CD8-positive, alpha-beta T cell (primary cell): ENCODE measurements at regions of chr1 and their contacts with region 1.

Region 1: DNA sequence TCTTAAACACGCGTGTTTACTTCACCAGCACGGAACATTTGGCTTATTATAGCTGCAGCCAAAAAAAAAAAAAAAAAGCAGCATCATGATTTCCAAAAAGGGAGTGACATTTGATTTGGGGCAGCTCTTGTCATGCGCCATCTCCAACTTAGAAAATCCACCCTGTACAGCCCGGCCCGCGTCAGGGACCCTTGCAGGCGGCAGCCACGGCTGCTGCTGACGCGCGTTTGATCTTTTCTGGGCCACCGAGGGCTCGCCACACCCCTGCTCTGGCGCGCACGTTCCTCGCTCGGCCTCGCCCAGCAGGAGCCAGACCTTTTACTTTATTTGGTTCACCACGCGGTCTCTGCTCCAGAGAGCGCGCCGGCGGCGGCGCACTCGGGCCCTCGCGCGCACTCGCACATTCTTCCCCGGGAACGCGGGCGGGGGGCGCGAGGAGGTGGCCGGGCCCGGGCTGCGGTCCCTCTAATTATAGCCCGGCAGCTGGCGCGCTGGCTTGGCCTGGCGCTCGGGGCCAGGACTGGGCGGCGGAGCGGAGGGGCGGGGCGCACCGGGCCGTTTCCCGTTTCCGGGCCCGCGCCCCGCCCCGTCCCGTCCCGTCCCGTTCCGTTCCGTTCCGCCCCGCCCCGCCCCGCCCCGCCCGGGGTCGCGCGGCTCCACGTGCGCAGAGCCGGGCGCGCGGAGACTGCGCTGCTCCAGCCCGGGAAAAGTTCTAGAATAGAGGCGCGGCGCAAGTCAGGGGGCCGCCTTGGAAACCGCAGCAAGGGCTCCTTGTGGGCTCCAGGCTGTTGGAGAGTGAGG is 10.2 kb downstream of the IRF2BP2 start:
- DNase-seq: peak; percentile 52 to 93 (median 78)
- ATAC-seq: peak; percentile 70
- H3K4me3 ChIP-seq: peak overlapping the region; percentile 47 to 54
- H3K4me3 Mint-ChIP-seq: peak overlapping the region; percentile 86
- H3K27ac ChIP-seq: peak overlapping the region; percentile 70 to 89
- H3K27ac Mint-ChIP-seq: peak overlapping the region; percentile 94
- H3K4me1 ChIP-seq: peaks cover 57% of the 10 kb centered on the region
- H3K4me1 Mint-ChIP-seq: peaks cover 55% of the 10 kb centered on the region
- H3K27me3 ChIP-seq: no peaks in the 10 kb centered on the region
- H3K27me3 Mint-ChIP-seq: no peaks in the 10 kb centered on the region
- CTCF ChIP-seq: no peak

Region 2: DNA sequence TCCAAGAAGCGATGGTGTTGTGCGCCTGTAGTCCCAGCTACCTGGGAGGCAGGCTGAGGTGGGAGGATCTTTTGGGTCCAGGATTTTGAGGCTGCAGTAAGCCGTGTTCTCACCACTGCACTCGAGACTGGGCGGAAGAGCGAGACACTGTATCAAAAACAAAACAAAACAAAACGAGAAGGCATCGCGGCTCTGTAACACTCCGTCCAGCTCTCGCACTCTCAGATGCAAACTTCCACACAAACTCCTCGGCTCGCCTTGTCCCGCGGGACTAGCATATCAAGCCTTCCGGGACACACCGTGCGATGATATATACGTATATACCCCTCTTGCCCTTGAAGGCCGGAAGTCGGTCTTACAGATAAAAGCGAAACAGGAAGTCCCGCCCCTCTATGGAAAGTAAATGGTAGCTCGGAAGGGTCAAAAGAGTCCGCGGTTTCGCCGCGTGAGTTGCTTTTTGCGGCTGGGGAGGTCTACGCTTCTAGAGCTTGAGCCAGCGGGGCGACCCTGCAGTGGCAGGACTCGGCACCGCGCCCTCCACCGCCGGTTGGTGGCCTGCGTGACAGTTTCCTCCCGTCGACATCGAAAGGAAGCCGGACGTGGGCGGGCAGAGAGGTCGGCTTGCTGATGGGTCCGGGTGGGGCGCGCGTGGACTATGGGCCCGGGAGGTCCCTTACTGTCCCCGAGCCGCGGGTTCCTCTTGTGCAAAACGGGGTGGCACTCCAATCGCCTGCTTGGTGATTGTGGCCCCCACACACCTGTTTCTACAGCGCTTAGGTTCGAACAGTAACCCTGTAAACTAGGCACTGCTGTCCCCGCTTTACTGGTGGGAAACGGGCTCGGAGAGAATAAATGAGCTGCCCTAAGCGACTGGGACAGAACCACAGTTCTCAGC is 226.5 kb before region 1 on chr1 and contains the start of gene COA6:
- CTCF ChIA-PET with region 1: no interaction called
- POLR2A ChIA-PET with region 1: no interaction called
- intact Hi-C with region 1: loop called in 1 of 2 experiments (anchors 5 kb)
- DNase-seq: peak; percentile 82 to 96 (median 88)
- ATAC-seq: peak; percentile 84
- H3K4me3 ChIP-seq: peak within 1 kb of the TSS; percentile 82 to 97
- H3K4me3 Mint-ChIP-seq: peak within 1 kb of the TSS; percentile 97
- H3K27ac ChIP-seq: peak within 1 kb of the TSS; percentile 88 to 99
- H3K27ac Mint-ChIP-seq: peak within 1 kb of the TSS; percentile 99
- H3K4me1 ChIP-seq: peaks cover 19% of the 10 kb centered on the region
- H3K4me1 Mint-ChIP-seq: peaks cover 49% of the 10 kb centered on the region
- H3K27me3 ChIP-seq: no peaks in the 10 kb centered on the region
- H3K27me3 Mint-ChIP-seq: no peaks in the 10 kb centered on the region
- CTCF ChIP-seq: no peak
- total RNA-seq, gene COA6: 7.2 to 8.9 TPM

Region 3: GRCh38 chr1:234610348-234611152 is 10.7 kb after region 1 on chr1:
- CTCF ChIA-PET with region 1: interaction called, 14 read pairs
- POLR2A ChIA-PET with region 1: interaction called, 129 read pairs
- intact Hi-C with region 1: loop called (anchors 1 kb)
- DNase-seq: peak; percentile 78 to 98 (median 89)
- ATAC-seq: peak; percentile 42
- H3K4me3 ChIP-seq: peak overlapping the region; percentile 78 to 86
- H3K4me3 Mint-ChIP-seq: peak overlapping the region; percentile 92
- H3K27ac ChIP-seq: peak overlapping the region; percentile 97 to 99
- H3K27ac Mint-ChIP-seq: peak overlapping the region; percentile 98
- H3K4me1 ChIP-seq: peaks cover 46% of the 10 kb centered on the region
- H3K4me1 Mint-ChIP-seq: peaks cover 49% of the 10 kb centered on the region
- H3K27me3 ChIP-seq: no peaks in the 10 kb centered on the region
- H3K27me3 Mint-ChIP-seq: no peaks in the 10 kb centered on the region
- CTCF ChIP-seq: no peak

Region 4: DNA sequence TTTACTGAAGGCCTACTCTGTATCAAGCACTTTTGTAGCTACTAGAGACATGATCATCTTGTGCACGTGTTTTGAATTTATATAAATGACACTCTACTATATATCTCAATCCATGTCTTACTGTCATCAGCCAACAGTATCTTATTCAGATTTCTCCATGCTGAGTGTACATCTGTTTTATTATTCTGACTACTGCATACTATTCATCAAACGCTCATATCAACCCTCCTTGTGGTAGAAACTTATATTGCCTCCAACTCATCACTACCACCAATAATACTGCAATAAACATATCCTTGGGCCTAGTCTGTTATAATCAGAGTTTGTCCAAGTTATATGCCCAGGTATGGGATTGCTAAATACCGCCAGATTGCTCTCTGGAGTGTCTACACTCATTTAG is 91.8 kb after region 1 on chr1:
- CTCF ChIA-PET with region 1: interaction called, 3 read pairs
- POLR2A ChIA-PET with region 1: no interaction called
- intact Hi-C with region 1: loop called in 1 of 2 experiments (anchors 5 kb)
- DNase-seq: peak in 2 of 9 experiments; percentile 27 to 50
- ATAC-seq: peak; percentile 69
- H3K4me3 ChIP-seq: no peak overlapping the region
- H3K4me3 Mint-ChIP-seq: no peak overlapping the region
- H3K27ac ChIP-seq: no peak overlapping the region
- H3K27ac Mint-ChIP-seq: no peak overlapping the region
- H3K4me1 ChIP-seq: no peaks in the 10 kb centered on the region
- H3K4me1 Mint-ChIP-seq: no peaks in the 10 kb centered on the region
- H3K27me3 ChIP-seq: no peaks in the 10 kb centered on the region
- H3K27me3 Mint-ChIP-seq: no peaks in the 10 kb centered on the region
- CTCF ChIP-seq: peak; percentile 23

Region 5: GRCh38 chr1:234772345-234773147 is 172.7 kb after region 1 on chr1:
- CTCF ChIA-PET with region 1: interaction called, 3 read pairs
- POLR2A ChIA-PET with region 1: no interaction called
- intact Hi-C with region 1: loop called in 1 of 2 experiments (anchors 2 kb)
- DNase-seq: peak; percentile 59 to 95 (median 85)
- ATAC-seq: peak; percentile 80
- H3K4me3 ChIP-seq: peak overlapping the region in 1 of 2 experiments; percentile 23
- H3K4me3 Mint-ChIP-seq: peak overlapping the region; percentile 66
- H3K27ac ChIP-seq: peak overlapping the region; percentile 39 to 73
- H3K27ac Mint-ChIP-seq: peak overlapping the region; percentile 94
- H3K4me1 ChIP-seq: peaks cover 58% of the 10 kb centered on the region
- H3K4me1 Mint-ChIP-seq: peaks cover 54% of the 10 kb centered on the region
- H3K27me3 ChIP-seq: no peaks in the 10 kb centered on the region
- H3K27me3 Mint-ChIP-seq: no peaks in the 10 kb centered on the region
- CTCF ChIP-seq: no peak

Region 6: DNA sequence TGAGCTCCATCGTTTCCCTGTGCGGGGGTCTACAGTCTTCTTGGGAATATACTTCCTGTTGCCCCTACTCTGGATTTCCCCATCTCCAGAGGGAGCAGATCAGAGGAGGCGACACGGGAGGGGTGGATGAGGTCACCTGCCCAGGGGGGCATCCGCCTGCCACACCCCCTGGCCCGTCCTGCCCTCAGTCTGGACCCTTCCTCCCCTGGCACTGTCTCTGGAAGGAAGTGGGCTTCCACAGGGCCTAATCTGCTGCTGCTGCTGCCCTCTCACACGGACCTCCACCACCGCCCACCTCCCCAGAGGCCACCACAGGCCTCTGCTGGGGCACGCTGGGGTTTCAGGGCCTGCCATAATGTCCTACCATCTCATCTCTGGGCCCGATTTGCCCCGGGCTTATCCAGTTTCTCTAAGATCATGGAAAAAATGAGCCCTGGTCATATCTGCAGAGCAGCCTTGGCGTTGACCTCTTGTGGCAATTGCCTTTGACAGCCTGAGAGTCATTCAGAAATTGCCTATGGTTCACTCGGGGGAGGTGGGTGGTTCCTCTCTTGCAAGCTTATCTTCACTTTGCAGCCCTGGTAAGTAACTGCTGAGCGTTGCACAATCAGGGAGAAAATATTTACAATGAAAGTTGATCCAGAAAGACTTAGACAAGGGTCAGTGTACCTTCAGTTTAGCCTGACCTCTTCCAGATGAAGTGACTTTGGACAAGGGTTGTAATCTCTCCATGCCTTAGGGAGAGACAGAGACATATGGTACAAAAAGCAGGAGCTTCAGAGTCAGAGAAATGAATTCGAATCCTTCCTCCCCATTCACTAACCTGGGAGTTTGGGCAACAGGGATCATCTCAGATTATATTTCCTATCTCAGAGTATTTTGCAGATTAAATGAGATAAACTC is 276.4 kb after region 1 on chr1:
- CTCF ChIA-PET with region 1: interaction called, 3 read pairs
- POLR2A ChIA-PET with region 1: no interaction called
- intact Hi-C with region 1: loop called in 1 of 2 experiments (anchors 5 kb)
- DNase-seq: no peak
- ATAC-seq: no peak
- H3K4me3 ChIP-seq: no peak overlapping the region
- H3K4me3 Mint-ChIP-seq: no peak overlapping the region
- H3K27ac ChIP-seq: no peak overlapping the region
- H3K27ac Mint-ChIP-seq: no peak overlapping the region
- H3K4me1 ChIP-seq: no peaks in the 10 kb centered on the region
- H3K4me1 Mint-ChIP-seq: peaks cover 7% of the 10 kb centered on the region
- H3K27me3 ChIP-seq: no peaks in the 10 kb centered on the region
- H3K27me3 Mint-ChIP-seq: no peaks in the 10 kb centered on the region
- CTCF ChIP-seq: no peak

Region 7: DNA sequence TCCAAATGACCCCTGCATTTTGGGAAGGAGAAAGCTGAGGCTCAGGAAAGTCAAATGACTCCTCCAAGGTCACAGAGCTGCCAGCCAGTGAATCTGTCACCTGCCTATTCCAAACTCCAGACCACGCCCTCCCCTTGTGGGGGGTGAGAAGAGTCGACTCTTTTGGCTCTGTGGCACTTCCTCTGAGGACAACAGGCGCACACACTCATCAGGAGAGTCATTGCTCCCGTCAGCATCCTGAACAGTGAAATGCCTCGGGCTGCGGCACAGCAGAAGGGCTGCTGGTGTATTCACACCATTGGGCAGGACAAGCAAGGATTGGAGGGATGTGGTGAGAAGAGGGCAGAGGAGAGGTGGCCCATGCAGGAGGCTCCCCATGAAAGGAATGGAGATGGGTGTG is 289.8 kb after region 1 on chr1:
- CTCF ChIA-PET with region 1: no interaction called
- POLR2A ChIA-PET with region 1: no interaction called
- intact Hi-C with region 1: no loop called
- DNase-seq: no peak
- ATAC-seq: no peak
- H3K4me3 ChIP-seq: no peak overlapping the region
- H3K4me3 Mint-ChIP-seq: no peak overlapping the region
- H3K27ac ChIP-seq: no peak overlapping the region
- H3K27ac Mint-ChIP-seq: no peak overlapping the region
- H3K4me1 ChIP-seq: peaks cover 9% of the 10 kb centered on the region
- H3K4me1 Mint-ChIP-seq: peaks cover 15% of the 10 kb centered on the region
- H3K27me3 ChIP-seq: no peaks in the 10 kb centered on the region
- H3K27me3 Mint-ChIP-seq: no peaks in the 10 kb centered on the region
- CTCF ChIP-seq: no peak

Region 8: DNA sequence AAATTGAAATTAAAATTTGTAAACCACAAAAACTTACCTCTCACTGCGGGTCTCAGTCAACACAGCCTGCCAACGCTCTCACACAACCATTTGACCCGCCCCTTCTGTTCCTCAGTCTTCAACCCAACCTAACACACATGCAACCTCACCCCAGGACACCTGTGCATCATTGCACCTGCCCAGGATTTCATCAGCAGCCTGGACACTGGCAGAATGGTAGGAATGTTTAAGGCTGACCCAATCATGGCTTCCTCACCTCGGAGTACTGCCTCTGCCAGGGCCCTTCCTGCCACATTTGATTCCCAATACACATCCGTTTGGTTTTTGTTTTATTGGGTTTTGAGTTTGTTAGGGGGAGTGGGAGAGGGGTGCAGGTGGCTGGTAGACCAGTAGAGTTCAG is 488.1 kb after region 1 on chr1:
- CTCF ChIA-PET with region 1: interaction called, 114 read pairs
- POLR2A ChIA-PET with region 1: interaction called, 7 read pairs
- intact Hi-C with region 1: loop called (anchors 1 kb)
- DNase-seq: no peak
- ATAC-seq: no peak
- H3K4me3 ChIP-seq: no peak overlapping the region
- H3K4me3 Mint-ChIP-seq: no peak overlapping the region
- H3K27ac ChIP-seq: no peak overlapping the region
- H3K27ac Mint-ChIP-seq: no peak overlapping the region
- H3K4me1 ChIP-seq: peaks cover 10% of the 10 kb centered on the region
- H3K4me1 Mint-ChIP-seq: peaks cover 13% of the 10 kb centered on the region
- H3K27me3 ChIP-seq: no peaks in the 10 kb centered on the region
- H3K27me3 Mint-ChIP-seq: no peaks in the 10 kb centered on the region
- CTCF ChIP-seq: no peak